ENCODE measurements at regions of chr5 and their contacts with region 1.

Region 1: DNA sequence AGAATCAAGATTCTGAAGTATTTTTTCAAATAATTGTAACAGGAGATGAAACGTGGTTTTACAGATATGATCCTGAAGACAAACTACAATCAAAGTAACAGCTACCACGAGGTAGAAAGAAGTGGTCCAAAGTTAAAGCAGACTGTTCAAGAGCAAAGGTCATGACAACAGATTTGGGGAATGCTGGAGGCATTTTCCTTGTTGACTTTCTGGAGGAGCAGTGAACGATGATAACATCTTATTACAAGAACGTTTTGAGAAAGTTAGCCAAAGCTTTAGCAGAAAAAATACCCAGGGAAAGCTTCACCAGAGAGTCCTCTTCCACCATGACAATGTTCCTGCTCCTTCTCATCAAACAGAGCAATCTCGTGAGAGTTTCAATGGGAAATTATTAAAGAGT is 145.4 kb upstream of the NREP start:
- DNase-seq: no peak
- CTCF ChIP-seq: no peak

Region 2: DNA sequence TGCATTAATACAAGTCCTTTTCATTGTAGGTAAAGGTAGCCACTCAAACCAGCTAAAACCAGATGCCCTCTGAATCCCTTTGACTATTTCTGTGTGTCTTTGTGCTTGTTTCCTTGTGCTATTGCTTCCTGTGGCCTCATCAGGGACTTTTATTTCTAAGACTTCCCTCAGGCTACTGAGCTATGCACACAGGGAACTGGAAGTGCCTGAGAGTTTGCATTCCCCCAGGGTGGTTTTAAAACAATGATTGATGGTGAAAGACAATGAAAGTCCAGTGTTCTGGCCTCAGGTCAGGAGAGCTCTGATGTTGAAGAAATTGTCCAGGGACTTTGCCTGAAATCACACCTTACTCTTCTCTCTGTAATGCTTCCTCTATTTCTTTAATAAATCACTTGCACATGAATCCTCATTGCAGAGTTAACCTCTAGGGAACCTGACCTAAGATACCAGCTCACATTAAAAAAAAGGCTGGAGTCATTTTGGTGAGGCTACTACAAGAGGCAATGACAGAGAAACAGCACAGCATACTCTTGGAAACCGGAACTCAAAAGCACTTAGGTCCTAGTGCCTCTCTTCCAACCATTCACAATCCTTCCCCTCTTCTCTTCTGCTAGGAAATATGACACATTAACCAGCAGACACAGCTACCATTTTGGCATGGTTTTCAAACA is 12.7 kb after region 1 on chr5:
- CTCF ChIA-PET with region 1: interaction called, 16 read pairs
- POLR2A ChIA-PET with region 1: no interaction called
- DNase-seq: no peak
- CTCF ChIP-seq: no peak

Region 3: DNA sequence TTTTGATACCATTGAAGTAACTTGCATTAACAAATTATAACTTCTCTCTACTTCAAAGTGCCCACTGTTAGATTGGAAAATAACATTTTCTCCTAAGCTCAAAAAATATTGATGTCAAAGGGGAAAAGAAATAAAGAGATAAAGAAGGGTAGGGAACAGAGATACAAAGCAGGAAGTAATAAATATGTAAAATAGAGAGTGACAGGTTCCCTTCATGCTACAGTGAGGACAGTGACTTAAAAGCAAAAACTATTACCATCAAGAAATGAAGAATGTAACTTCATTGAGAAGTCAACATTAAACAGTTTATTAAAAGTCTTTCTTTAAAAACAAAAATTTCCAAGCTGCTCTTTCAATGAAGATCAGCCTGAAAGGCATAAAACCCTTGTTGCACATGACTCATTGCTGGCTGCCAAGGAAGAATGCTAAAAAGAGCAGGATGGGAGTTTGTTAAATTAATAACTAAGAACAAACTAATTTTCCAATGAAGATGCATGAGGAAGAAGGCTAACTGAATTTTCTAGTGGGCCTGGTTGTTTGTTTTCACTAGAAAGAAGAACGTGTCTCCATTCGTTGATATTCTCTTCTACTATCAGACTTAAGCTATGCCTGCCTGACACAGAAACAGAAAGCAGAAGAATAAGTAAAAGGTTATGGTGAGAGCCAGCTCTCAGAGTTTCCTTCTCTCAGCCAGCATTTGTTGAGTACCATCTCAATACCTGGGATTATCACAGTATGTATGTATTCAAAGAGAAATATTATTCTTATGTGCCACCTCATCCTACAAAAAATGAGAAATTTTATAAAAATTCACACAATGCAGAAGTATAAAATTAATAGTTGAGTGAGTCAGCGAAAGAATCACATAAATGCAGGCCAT is 52.3 kb after region 1 on chr5:
- CTCF ChIA-PET with region 1: no interaction called
- POLR2A ChIA-PET with region 1: no interaction called
- DNase-seq: peak; percentile 20
- CTCF ChIP-seq: no peak

Measured in GM10248 (cell line).